ENCODE measurements at regions of chr21 and their contacts with region 1.

Region 1: DNA sequence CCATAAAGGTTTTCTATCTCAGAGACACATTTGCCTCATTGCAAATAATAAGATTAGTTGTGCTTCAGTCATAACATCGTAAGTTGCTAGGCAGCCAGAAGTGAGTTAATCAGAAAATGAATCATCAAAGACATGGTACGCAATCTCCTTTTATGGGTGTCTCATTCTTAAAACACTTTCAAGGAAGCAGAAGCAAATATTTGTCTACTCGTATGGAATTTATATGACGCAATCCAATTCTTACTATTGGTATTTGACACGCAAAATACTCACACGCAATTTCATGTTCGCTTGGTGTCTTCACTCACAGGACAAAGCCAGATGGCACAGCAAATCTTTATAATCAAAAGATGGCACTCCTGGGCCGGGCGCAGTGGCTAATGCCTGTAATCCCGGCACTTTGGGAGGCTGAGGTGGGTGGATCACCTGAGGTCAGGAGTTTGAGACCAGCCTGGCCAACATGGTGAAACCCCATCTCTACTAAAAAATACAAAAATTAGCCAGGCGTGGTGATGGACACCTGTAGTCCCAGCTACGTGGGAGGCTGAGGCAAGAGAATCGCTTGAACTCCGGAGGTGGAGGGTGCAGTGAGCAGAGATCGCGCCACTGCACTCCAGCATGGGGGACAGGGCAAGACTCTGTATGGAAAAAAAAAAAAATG is 56.4 kb downstream of the HLCS start:
- DNase-seq: peak; percentile 92
- H3K4me3 Mint-ChIP-seq: peak overlapping the region; percentile 60
- H3K27ac Mint-ChIP-seq: peak overlapping the region; percentile 99
- H3K4me1 Mint-ChIP-seq: peaks cover 6% of the 10 kb centered on the region
- H3K27me3 Mint-ChIP-seq: no peaks in the 10 kb centered on the region
- CTCF ChIP-seq: no peak

Region 2: DNA sequence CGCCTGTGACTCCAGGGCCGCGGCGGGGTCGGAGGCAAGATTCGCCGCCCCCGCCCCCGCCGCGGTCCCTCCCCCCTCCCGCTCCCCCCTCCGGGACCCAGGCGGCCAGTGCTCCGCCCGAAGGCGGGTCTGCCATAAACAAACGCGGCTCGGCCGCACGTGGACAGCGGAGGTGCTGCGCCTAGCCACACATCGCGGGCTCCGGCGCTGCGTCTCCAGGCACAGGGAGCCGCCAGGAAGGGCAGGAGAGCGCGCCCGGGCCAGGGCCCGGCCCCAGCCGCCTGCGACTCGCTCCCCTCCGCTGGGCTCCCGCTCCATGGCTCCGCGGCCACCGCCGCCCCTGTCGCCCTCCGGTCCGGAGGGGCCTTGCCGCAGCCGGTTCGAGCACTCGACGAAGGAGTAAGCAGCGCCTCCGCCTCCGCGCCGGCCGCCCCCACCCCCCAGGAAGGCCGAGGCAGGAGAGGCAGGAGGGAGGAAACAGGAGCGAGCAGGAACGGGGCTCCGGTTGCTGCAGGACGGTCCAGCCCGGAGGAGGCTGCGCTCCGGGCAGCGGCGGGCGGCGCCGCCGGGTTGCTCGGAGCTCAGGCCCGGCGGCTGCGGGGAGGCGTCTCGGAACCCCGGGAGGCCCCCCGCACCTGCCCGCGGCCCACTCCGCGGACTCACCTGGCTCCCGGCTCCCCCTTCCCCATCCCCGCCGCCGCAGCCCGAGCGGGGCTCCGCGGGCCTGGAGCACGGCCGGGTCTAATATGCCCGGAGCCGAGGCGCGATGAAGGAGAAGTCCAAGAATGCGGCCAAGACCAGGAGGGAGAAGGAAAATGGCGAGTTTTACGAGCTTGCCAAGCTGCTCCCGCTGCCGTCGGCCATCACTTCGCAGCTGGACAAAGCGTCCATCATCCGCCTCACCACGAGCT is 210.8 kb before region 1 on chr21 and contains the start of gene SIM2:
- CTCF ChIA-PET with region 1: interaction called, 7 read pairs
- POLR2A ChIA-PET with region 1: no interaction called
- intact Hi-C with region 1: loop called (anchors 5 kb)
- DNase-seq: peak; percentile 76
- H3K4me3 Mint-ChIP-seq: peak within 1 kb of the TSS; percentile 81
- H3K27ac Mint-ChIP-seq: peak within 1 kb of the TSS; percentile 83
- H3K4me1 Mint-ChIP-seq: peaks cover 13% of the 10 kb centered on the region
- H3K27me3 Mint-ChIP-seq: no peaks in the 10 kb centered on the region
- CTCF ChIP-seq: no peak
- total RNA-seq, gene SIM2: 11.2 and 14.4 TPM in 2 replicates

Region 3: DNA sequence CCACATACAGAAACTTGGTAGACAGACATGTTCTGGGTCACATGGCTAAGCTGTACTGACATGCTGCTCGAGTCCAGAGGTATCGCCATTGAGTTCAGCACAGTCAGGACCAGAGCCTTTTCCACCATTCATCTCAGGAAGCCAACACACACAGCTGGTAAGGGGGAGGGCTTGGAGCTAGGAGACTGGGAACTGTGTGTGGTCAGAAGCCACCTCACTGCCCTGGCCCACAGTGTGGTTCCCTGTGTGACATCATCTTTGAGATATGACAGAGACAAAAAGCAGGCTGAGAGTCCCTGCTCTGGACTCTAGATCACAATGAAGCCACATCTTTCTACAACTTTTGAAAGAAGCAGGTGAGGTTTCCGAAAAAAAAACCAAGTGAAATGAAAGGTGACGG is 103.9 kb before region 1 on chr21:
- CTCF ChIA-PET with region 1: no interaction called
- POLR2A ChIA-PET with region 1: no interaction called
- intact Hi-C with region 1: no loop called
- DNase-seq: no peak
- H3K4me3 Mint-ChIP-seq: no peak overlapping the region
- H3K27ac Mint-ChIP-seq: no peak overlapping the region
- H3K4me1 Mint-ChIP-seq: no peaks in the 10 kb centered on the region
- H3K27me3 Mint-ChIP-seq: no peaks in the 10 kb centered on the region
- CTCF ChIP-seq: no peak

Measured in MCF 10A (cell line).